ENCODE measurements at regions of chr1 and their contacts with region 1.

Region 1: DNA sequence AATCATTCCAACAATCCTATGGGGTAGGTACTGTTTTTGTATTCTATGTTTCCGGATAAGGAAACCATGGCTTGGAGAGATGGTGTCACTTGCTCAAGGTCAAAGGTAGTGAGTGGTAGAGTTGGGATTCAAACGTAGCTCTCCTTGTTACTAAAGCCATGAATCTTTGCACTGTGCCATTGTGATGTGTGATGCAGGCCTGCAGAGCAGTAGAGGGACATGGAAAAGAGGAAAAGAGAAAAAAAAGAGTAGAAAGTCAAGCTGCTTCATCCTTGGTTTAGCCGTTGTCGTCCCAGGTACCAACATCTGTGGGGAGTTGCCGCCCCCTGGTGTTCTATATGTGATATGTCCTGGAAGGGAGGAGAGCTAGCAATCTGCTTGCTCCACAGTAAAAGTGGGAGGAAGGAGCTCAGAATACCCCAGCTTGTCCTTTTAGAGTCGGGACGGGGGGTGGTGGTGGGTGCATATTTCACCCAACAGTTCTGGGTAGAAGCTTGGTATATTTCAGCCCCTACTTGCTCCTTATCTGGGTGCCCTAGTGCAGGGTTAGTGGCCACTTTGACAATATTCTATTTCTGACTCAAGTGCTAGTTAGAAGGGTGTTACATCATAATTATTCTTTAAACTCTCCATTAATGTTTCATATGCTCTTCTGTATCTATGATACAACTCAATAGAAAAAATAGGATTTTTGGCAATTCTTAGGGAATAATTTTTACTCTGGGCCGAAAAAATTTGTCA is 98.4 kb downstream of the EBNA1BP2 start:
- DNase-seq: peak; percentile 77 to 82 (median 80)
- ATAC-seq: peak; percentile 82
- H3K4me3 ChIP-seq: no peak overlapping the region
- H3K27ac ChIP-seq: no peak overlapping the region
- H3K4me1 ChIP-seq: peaks cover 16% of the 10 kb centered on the region
- H3K27me3 ChIP-seq: no peaks in the 10 kb centered on the region
- CTCF ChIP-seq: peak; percentile 33 to 94 (median 91)
- POLR2A ChIP-seq: no peak

Region 2: GRCh38 chr1:42913426-42914091 is 160.1 kb before region 1 on chr1:
- intact Hi-C with region 1: loop called (anchors 5 kb)
- DNase-seq: peak; percentile 67 to 84 (median 71)
- ATAC-seq: peak; percentile 95
- H3K4me3 ChIP-seq: no peak overlapping the region
- H3K27ac ChIP-seq: no peak overlapping the region
- H3K4me1 ChIP-seq: no peaks in the 10 kb centered on the region
- H3K27me3 ChIP-seq: no peaks in the 10 kb centered on the region
- CTCF ChIP-seq: peak; percentile 61 to 97 (median 94)
- POLR2A ChIP-seq: no peak